Gastrocnemius medialis (tissue), 4 donors: ENCODE measurements at regions of chr5 and their contacts with region 1.

Region 1: GRCh38 chr5:43073597-43074546 is 33.8 kb upstream of the ANXA2R start:
- DNase-seq: no peak
- ATAC-seq: peak in 1 of 2 donors; percentile 49
- H3K4me3 ChIP-seq: no peak overlapping the region
- H3K27ac ChIP-seq: peak overlapping the region in 2 of 4 donors; percentile 74 to 84
- H3K4me1 ChIP-seq: peaks cover 21 to 28% of the 10 kb centered on the region in 2 donors
- H3K27me3 ChIP-seq: no peaks in the 10 kb centered on the region
- CTCF ChIP-seq: peak; percentile 31 to 71 (median 57)
- POLR2A ChIP-seq: no peak

Region 2: GRCh38 chr5:43191740-43192557 is 118.1 kb after region 1 on chr5 and contains the start of gene NIM1K:
- in situ Hi-C with region 1: no loop called
- intact Hi-C with region 1: loop called (anchors 10 kb)
- DNase-seq: peak; percentile 19 to 23
- ATAC-seq: peak; percentile 66 to 68
- H3K4me3 ChIP-seq: peak within 1 kb of the TSS; percentile 62 to 75 (median 70)
- H3K27ac ChIP-seq: peak within 1 kb of the TSS; percentile 14 to 68 (median 42)
- H3K4me1 ChIP-seq: peaks cover 0 to 25% of the 10 kb centered on the region in 2 donors
- H3K27me3 ChIP-seq: no peaks in the 10 kb centered on the region
- CTCF ChIP-seq: no peak
- POLR2A ChIP-seq: no peak
- total RNA-seq, gene NIM1K: 0.41 TPM in 1 of 4 donors, not detected in the others

Region 3: DNA sequence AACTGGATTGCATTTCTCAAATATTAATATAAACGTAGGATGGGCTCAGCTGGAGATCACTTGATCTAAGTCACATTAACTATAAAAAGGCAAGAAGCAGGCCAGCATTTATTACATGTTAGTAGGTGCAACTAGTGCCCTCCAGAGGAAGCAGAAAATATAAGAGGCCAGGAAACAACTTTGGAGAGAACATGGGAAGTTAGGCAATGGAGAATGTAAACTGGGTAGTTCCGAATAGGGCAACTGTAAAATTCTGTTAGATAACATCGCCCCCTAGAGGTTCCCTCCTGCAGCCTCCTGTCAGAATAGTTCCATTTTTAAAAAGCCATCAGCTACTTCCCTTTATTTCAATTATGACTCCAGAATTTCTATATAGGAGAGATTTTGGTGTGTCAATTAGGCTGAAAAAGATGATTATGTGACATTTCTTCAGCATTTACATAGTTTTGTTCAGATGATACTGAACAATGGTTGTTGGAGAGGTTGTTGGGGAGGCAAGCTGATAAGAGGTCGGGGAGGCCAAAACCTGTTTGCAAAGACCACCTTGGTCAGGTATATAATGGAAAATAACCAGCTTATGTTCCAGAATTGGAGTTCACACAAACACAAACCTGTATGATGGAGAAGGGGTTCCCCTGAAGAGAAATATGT is 315.9 kb after region 1 on chr5:
- in situ Hi-C with region 1: no loop called
- intact Hi-C with region 1: loop called (anchors 10 kb)
- DNase-seq: peak; percentile 15 to 35
- ATAC-seq: peak; percentile 77 to 96
- H3K4me3 ChIP-seq: no peak overlapping the region
- H3K27ac ChIP-seq: no peak overlapping the region
- H3K4me1 ChIP-seq: no peaks in the 10 kb centered on the region
- H3K27me3 ChIP-seq: no peaks in the 10 kb centered on the region
- CTCF ChIP-seq: peak; percentile 44 to 76 (median 55)
- POLR2A ChIP-seq: no peak